PC-9 (cell line): ENCODE measurements at regions of chrX and their contacts with region 1.

Region 1: GRCh38 chrX:128653524-128653923 is 601.3 kb upstream of the ACTRT1 start:
- DNase-seq: no peak
- H3K4me3 ChIP-seq: no peak overlapping the region
- H3K27ac ChIP-seq: no peak overlapping the region
- H3K4me1 ChIP-seq: no peaks in the 10 kb centered on the region
- H3K27me3 ChIP-seq: no peaks in the 10 kb centered on the region
- CTCF ChIP-seq: no peak

Region 2: DNA sequence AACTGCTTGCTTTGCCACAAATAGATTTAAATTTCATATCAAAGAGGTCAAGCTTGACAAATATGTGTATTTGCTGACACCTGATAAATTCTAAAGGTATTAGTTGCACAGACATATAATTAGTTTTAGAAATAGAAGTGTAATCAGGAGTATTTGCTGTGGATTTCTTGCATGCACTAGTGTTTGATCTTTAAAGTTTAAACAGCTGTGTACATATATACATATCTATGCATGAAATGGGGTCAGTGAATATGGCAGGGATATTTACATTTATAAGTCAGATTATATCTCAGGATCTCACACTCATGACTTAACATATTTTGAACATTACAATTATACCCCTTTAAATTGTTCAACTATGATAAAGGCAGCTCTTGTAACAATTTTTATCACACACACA is 53.9 kb before region 1 on chrX:
- CTCF ChIA-PET with region 1: no interaction called
- POLR2A ChIA-PET with region 1: interaction called, 11 read pairs
- intact Hi-C with region 1: no loop called
- DNase-seq: no peak
- H3K4me3 ChIP-seq: no peak overlapping the region
- H3K27ac ChIP-seq: no peak overlapping the region
- H3K4me1 ChIP-seq: no peaks in the 10 kb centered on the region
- H3K27me3 ChIP-seq: no peaks in the 10 kb centered on the region
- CTCF ChIP-seq: no peak

Region 3: DNA sequence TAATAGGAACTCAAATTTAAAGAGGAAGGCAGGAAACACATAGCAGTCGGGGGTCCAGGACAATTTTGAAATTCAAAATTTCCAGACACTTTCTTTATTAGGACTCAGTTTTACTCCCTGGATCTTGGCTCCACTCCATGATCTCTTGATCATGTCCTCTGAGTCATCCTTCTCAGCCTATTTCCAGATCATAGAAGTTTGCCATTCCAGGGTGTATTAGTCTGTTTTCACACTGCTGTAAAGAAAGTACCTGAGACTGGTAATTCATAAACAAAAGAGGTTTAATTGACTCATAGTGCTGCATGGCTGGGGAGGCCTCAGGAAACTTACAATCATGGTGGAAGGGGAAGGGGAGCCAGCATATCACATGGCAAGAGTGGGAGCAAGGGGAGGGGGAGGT is 36.6 kb before region 1 on chrX:
- CTCF ChIA-PET with region 1: no interaction called
- POLR2A ChIA-PET with region 1: no interaction called
- intact Hi-C with region 1: no loop called
- DNase-seq: no peak
- H3K4me3 ChIP-seq: no peak overlapping the region
- H3K27ac ChIP-seq: no peak overlapping the region
- H3K4me1 ChIP-seq: no peaks in the 10 kb centered on the region
- H3K27me3 ChIP-seq: no peaks in the 10 kb centered on the region
- CTCF ChIP-seq: no peak